ENCODE measurements at regions of chr6 and their contacts with region 1.

Region 1: GRCh38 chr6:132279592-132280139 is 121.6 kb downstream of the MOXD1 start:
- DNase-seq: peak; percentile 43
- H3K4me3 ChIP-seq: peak overlapping the region; percentile 49 to 78
- H3K27ac ChIP-seq: no peak overlapping the region
- H3K4me1 ChIP-seq: no peaks in the 10 kb centered on the region; a peak in 1 of 4 replicates
- H3K27me3 ChIP-seq: peaks cover 4% of the 10 kb centered on the region
- CTCF ChIP-seq: peak; percentile 98
- EP300 ChIP-seq: no peak
- RAD21 ChIP-seq: peak; percentile 69

Region 2: DNA sequence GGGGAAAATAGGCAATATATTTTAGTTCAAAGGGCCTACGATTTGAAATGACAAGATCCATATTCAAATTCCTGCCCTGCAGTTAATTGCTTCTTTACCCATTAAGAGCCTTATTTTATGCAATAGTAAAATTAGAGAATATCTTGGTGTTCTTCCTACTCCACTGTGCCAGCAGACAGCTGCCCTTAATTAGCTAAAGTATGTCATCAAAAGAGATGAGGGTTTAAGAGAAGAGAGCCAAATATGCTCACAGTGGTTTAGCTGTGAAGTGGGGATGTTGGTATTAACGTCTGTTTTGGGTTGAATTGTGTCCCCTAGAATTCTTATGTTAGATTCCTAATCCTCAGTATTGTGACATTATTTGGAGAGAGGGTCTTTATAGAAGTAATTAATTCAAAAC is 26.5 kb before region 1 on chr6:
- CTCF ChIA-PET with region 1: interaction called, 18 read pairs
- POLR2A ChIA-PET with region 1: no interaction called
- DNase-seq: no peak
- H3K4me3 ChIP-seq: no peak overlapping the region
- H3K27ac ChIP-seq: no peak overlapping the region
- H3K4me1 ChIP-seq: no peaks in the 10 kb centered on the region
- H3K27me3 ChIP-seq: no peaks in the 10 kb centered on the region
- CTCF ChIP-seq: no peak
- EP300 ChIP-seq: no peak
- RAD21 ChIP-seq: no peak

Region 3: GRCh38 chr6:132300323-132300949 is 20.8 kb after region 1 on chr6:
- CTCF ChIA-PET with region 1: interaction called, 124 read pairs
- POLR2A ChIA-PET with region 1: no interaction called
- DNase-seq: peak; percentile 14
- H3K4me3 ChIP-seq: no peak overlapping the region; a peak in 1 of 4 replicates
- H3K27ac ChIP-seq: no peak overlapping the region
- H3K4me1 ChIP-seq: no peaks in the 10 kb centered on the region; a peak in 1 of 4 replicates
- H3K27me3 ChIP-seq: no peaks in the 10 kb centered on the region
- CTCF ChIP-seq: peak; percentile 82
- EP300 ChIP-seq: no peak
- RAD21 ChIP-seq: peak; percentile 71

Region 4: DNA sequence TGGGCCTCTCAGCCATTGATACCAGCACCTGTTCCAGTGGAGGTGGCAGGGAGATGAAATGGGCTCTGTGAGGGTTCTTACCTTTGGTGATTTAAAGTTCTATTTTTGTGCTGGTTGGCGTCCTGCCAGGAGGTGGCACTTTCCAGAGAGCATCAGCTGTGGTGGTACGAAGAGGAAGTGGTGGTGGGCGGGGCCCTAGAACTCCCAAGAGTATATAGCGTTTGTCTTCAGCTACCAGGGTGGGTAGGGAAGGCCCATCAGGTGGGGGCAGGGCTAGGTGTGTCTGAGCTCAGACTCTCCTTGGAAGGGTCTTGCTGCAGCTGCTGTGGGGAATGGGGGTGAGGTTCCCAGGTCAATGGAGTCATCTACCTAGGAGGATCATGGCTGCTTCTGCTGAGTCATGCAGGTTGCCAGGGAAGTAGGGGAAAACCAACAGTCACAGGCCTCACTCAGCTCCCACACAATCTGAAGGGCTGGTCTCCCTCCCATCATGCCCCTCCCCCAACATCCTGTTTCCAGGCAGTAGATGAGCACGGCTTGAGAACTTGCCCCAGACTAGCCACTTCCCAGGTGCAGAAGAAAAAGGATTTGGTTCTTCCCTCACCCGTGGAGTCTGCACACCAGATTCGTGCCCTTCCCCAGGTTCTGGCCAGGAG is 75.0 kb after region 1 on chr6:
- CTCF ChIA-PET with region 1: interaction called, 12 read pairs
- POLR2A ChIA-PET with region 1: no interaction called
- DNase-seq: no peak
- H3K4me3 ChIP-seq: no peak overlapping the region
- H3K27ac ChIP-seq: no peak overlapping the region
- H3K4me1 ChIP-seq: no peaks in the 10 kb centered on the region; a peak in 1 of 4 replicates
- H3K27me3 ChIP-seq: no peaks in the 10 kb centered on the region
- CTCF ChIP-seq: no peak
- EP300 ChIP-seq: no peak
- RAD21 ChIP-seq: no peak

Region 5: DNA sequence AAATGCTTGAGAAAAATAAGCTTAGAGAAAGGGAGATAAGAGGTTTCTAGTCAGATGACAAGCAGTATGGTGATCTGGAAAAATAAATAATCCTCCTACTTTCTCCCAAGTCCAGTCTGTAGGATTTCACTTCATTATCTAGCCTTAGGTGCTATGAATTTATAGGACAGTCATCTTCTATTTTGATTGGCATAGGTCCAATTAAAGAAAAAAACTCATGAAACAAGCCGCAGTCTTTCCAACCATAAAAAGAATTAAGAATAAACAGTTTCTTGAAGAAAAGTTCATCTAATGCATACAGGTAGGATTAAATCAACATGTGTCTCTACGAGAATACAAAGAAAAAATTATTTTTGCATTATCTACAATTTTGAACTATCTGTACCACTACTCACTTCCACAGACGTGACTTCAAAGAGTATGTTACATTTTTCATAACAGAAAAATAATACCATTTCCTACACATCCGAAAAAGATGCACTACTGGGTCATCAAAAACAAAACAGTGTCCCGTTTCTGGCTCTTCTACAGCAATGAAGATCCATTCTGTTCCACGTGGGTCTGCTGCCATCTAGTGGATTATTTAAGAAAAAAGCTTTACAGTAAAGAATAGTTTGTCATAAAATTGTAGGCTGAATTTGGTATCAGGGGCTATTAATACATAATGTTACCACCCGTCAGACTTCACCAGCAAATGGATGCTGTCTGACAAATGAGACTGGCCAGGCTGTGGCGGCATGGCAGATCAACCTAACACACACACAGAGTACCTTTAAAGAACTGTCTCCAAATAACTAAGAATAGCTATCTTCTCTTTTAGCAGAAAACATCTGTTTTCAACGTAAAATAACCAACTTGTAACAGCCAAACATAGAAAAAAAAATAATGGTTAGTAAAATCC is 204.4 kb after region 1 on chr6:
- CTCF ChIA-PET with region 1: interaction called, 212 read pairs
- POLR2A ChIA-PET with region 1: no interaction called
- DNase-seq: peak; percentile 45
- H3K4me3 ChIP-seq: no peak overlapping the region
- H3K27ac ChIP-seq: no peak overlapping the region
- H3K4me1 ChIP-seq: no peaks in the 10 kb centered on the region; a peak in 1 of 4 replicates
- H3K27me3 ChIP-seq: no peaks in the 10 kb centered on the region
- CTCF ChIP-seq: peak; percentile 79
- EP300 ChIP-seq: no peak
- RAD21 ChIP-seq: peak; percentile 93

Region 6: DNA sequence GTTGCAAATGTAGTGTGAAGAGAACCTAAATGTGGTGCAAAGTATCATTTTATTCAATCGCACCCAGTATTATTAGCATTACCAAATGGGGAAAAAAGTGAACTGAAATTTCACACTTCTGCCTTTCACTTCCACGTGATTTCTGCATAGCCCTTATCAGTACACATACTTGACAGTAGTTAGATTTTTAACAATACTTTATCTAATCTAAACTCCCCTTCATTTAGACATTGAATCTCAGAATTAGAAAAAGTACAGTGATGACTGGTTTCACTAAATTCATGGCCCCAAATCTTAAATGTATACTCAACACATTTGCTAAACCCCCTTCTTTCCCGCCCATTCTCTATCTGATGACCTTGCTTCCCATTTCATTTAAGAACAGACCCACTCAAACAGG is 219.0 kb after region 1 on chr6:
- CTCF ChIA-PET with region 1: interaction called, 25 read pairs
- POLR2A ChIA-PET with region 1: no interaction called
- DNase-seq: no peak
- H3K4me3 ChIP-seq: no peak overlapping the region
- H3K27ac ChIP-seq: no peak overlapping the region
- H3K4me1 ChIP-seq: no peaks in the 10 kb centered on the region; a peak in 1 of 4 replicates
- H3K27me3 ChIP-seq: no peaks in the 10 kb centered on the region
- CTCF ChIP-seq: no peak
- EP300 ChIP-seq: no peak
- RAD21 ChIP-seq: no peak